ENCODE measurements at regions of chr9 and their contacts with region 1.

Region 1: GRCh38 chr9:22342491-22343217 is 104.0 kb upstream of the DMRTA1 start:
- DNase-seq: no peak
- ATAC-seq: no peak
- H3K4me3 Mint-ChIP-seq: no peak overlapping the region
- H3K27ac Mint-ChIP-seq: no peak overlapping the region
- H3K4me1 Mint-ChIP-seq: no peaks in the 10 kb centered on the region
- H3K27me3 Mint-ChIP-seq: no peaks in the 10 kb centered on the region
- CTCF ChIP-seq: no peak

Region 2: GRCh38 chr9:22363421-22363887 is 20.8 kb after region 1 on chr9:
- CTCF ChIA-PET with region 1: no interaction called
- POLR2A ChIA-PET with region 1: no interaction called
- intact Hi-C with region 1: loop called (anchors 2 kb)
- DNase-seq: no peak
- ATAC-seq: no peak
- H3K4me3 Mint-ChIP-seq: no peak overlapping the region
- H3K27ac Mint-ChIP-seq: no peak overlapping the region
- H3K4me1 Mint-ChIP-seq: no peaks in the 10 kb centered on the region
- H3K27me3 Mint-ChIP-seq: no peaks in the 10 kb centered on the region
- CTCF ChIP-seq: no peak

Measured in activated CD8-positive, alpha-beta T cell treated with anti-CD3 and anti-CD28 coated beads for 36 hours (primary cell).